GM10248 (cell line): ENCODE measurements at regions of chr3 and their contacts with region 1.

Region 1: DNA sequence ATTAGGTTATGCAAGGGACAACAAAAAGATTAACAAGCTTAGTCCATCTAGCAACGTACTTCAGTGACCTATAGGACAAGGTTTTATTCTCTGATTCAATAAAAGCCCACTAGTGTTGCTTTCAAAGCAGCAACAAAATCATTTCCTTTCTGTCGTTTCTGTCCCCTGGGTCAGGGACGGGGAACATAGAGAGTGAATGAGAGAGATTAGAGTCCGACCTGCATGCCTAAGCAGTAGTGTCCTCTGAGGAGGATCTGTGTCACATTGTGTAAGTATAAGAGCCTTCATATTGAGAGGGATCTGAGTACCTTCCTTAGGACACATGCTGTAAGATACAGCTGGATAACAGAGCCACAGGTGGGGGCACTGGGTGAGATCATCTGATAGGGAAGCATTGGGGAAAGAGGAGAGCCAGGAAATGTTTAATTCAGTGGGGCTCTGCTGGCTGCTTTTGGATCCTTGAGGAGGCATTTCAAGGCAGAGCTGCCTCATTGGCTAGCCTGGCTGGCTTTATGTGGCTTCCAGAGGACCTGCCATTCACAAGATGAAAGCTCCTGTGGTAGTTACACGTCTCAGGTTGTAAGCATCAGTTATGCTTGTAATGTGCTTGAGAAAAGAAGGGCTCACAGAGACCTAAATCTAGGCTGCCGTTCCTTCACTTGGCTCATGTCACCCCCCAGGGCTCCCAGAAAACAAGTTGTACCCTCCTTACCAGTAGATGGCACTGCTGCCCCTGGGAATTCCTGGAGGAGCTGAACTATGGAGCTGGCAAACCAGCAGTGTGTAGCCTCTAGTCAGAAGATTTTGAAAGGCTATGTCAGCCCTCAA is 2.7 kb downstream of the TMEM108 start:
- DNase-seq: peak; percentile 61
- CTCF ChIP-seq: peak; percentile 68

Region 2: GRCh38 chr3:133106169-133106568 is 65.3 kb after region 1 on chr3:
- CTCF ChIA-PET with region 1: no interaction called
- POLR2A ChIA-PET with region 1: no interaction called
- DNase-seq: no peak
- CTCF ChIP-seq: no peak

Region 3: DNA sequence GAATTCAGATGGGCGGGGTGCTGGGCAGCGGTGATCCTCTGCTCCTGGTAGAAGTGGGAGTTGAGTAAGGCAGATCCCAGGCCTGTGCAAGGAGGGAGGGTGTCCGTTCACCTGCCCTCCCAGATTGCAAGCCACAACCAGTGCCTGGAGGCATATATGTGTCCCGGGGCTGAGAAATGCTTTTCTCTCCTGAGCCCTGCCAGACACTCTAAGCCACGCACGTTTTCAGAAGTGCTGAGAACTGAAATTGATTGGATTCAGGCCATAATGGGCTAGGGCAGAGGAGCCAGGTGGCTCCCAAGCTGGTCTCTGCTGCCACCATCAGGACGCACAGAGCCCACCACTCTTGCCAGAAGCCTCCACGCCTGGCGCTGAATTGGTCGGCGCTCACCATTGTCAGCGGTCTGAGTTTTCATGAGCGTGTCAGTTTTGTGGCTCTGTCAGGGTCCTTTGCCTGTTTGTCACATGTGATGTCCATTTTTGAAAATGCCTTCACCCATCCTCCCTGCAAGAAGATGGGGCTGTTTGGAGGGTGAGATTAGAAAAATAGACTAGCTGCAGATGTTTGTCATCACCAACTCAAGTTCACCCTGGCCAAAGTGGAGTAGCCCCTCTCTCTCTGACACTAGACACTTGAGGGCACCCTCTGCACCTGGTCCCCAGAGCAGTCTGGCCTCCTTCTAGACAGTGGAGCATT is 343.6 kb after region 1 on chr3:
- CTCF ChIA-PET with region 1: interaction called, 33 read pairs
- POLR2A ChIA-PET with region 1: no interaction called
- DNase-seq: peak; percentile 61
- CTCF ChIP-seq: peak; percentile 64

Region 4: DNA sequence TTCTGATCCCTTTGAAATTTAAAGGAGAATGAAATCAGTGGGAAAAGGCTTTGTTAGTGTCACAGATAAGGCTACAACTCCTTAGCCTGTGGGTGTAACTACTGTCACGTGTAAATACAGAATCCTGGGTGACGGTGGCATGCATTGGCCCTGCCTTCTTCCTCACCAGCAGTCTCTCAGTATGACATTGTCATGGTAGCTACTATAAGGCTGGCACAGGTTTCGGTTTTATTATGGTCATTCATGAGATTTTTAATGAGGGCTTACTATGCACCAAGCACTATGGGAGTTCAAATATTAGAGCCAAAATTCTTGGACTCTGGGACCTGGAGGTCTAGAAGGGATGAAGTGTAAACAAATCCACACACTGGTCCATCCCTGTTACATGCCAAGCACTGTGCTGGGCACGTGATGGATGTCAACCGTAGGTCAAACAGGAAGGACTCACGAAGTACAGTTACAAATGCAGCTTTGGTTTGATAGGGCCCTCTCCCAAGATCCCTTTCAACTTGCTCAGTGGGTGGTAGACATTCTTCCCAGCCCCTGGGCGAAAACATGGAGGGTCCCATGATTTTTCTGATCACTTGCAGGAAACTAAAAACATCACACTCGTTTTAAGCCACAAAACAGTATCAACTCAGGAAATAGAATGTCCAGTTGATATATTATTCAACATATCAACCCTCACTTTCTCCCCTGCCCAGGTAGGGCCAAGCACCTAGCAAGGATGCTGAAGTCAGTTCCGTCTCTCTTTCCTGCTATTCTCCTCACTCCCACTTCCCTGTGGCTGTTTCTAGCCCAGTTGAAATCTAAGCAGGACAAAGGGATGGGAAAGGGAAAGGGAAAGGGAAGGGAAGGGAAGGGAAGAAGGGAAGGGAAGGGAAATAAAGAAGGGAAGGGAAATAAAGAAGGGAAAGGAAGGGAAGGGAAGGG is 384.3 kb after region 1 on chr3:
- CTCF ChIA-PET with region 1: interaction called, 18 read pairs
- POLR2A ChIA-PET with region 1: no interaction called
- DNase-seq: no peak
- CTCF ChIP-seq: no peak